MCF 10A (cell line): ENCODE measurements at regions of chr15 and their contacts with region 1.

Region 1: DNA sequence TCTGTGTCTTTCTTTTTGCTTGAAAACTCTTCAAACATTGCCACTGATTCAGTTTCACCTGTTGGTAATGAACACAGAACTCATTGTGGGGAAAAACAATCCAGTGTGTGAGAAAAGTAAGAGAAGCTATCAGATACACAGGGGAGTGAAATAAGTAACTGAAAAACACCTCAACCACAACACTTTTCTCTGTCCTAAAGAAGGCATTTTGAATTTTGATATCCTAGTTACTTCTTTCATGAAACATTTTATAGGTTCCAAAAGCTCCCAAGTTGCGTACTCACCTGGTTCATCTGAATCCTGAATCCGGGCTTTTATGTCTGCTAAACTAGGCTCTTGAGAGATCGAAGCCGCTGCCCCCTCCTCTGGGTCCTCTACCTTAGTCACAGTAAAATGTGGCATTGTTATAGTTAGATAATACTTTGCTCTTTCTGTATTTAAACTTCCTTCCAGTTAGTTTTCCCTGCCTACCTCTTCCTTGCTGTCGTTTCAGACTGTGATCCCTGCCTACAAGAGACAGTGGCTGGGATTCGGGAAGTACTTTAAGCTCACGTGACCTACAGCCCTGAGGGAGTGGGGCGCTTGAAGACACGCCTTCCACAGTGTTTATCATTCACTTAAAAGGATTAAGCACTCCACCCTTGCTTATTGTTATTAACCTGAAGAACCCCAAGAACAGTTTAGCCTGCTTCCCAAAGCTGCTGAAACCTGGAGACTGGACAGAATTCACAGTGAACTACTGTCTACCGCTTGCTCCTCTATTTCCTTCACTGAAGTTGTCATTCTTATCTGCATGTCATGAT is 19.1 kb downstream of the SLC12A6 start:
- DNase-seq: peak; percentile 77
- H3K4me3 Mint-ChIP-seq: peak overlapping the region; percentile 86
- H3K27ac Mint-ChIP-seq: peak overlapping the region; percentile 96
- H3K4me1 Mint-ChIP-seq: peaks cover 21% of the 10 kb centered on the region
- H3K27me3 Mint-ChIP-seq: no peaks in the 10 kb centered on the region
- CTCF ChIP-seq: no peak

Region 2: DNA sequence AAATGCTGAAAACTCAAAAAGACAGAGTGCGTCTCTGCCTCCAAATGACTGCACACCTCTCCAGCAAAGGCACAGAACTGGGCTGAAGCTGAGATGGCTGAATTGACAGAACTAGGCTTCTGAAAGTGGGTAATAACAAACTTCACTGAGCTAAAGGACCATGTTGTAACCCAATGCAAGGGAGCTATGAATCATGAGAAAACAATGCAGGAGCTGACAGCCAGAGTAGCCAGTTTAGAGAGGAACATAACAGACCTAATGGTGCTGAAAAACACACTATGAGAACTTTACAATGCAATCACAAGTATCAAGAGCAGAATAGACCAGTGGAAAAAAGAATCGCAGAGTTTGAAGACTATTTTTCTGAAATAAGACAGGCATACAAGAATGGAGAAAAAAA is 269.4 kb before region 1 on chr15:
- CTCF ChIA-PET with region 1: no interaction called
- POLR2A ChIA-PET with region 1: no interaction called
- intact Hi-C with region 1: no loop called
- DNase-seq: peak; percentile 66
- H3K4me3 Mint-ChIP-seq: no peak overlapping the region
- H3K27ac Mint-ChIP-seq: no peak overlapping the region
- H3K4me1 Mint-ChIP-seq: peaks cover 10% of the 10 kb centered on the region
- H3K27me3 Mint-ChIP-seq: peaks cover 11% of the 10 kb centered on the region
- CTCF ChIP-seq: no peak

Region 3: GRCh38 chr15:34241372-34242330 is 76.8 kb before region 1 on chr15:
- CTCF ChIA-PET with region 1: interaction called, 5 read pairs
- POLR2A ChIA-PET with region 1: interaction called, 26 read pairs
- intact Hi-C with region 1: no loop called
- DNase-seq: peak; percentile 64
- H3K4me3 Mint-ChIP-seq: no peak overlapping the region
- H3K27ac Mint-ChIP-seq: no peak overlapping the region
- H3K4me1 Mint-ChIP-seq: peaks cover 13% of the 10 kb centered on the region
- H3K27me3 Mint-ChIP-seq: no peaks in the 10 kb centered on the region
- CTCF ChIP-seq: peak; percentile 68

Region 4: DNA sequence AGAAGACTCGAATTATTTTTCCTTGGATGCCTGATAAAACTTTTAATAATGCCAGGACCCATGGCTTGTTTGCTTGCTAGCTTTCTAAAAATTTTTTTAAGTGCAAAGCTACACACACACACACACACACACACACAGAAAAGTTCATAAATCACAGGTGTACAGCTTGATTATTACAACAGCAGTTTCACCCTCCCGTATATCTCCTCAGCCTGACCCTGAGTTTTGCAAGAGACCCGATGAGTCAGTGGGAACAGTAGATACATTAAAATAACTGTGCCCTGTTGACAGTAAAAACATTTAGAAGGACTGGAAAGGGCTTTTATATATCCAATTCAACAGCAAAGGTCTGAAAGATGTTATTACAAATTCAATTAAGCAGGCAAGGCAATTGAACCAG is 47.0 kb before region 1 on chr15:
- CTCF ChIA-PET with region 1: no interaction called
- POLR2A ChIA-PET with region 1: interaction called, 13 read pairs
- intact Hi-C with region 1: no loop called
- DNase-seq: peak; percentile 89
- H3K4me3 Mint-ChIP-seq: no peak overlapping the region
- H3K27ac Mint-ChIP-seq: peak overlapping the region; percentile 3
- H3K4me1 Mint-ChIP-seq: peaks cover 19% of the 10 kb centered on the region
- H3K27me3 Mint-ChIP-seq: no peaks in the 10 kb centered on the region
- CTCF ChIP-seq: no peak

Region 5: GRCh38 chr15:34304613-34305012 is 13.9 kb before region 1 on chr15:
- CTCF ChIA-PET with region 1: no interaction called
- POLR2A ChIA-PET with region 1: interaction called, 18 read pairs
- intact Hi-C with region 1: no loop called
- DNase-seq: no peak
- H3K4me3 Mint-ChIP-seq: no peak overlapping the region
- H3K27ac Mint-ChIP-seq: no peak overlapping the region
- H3K4me1 Mint-ChIP-seq: peaks cover 13% of the 10 kb centered on the region
- H3K27me3 Mint-ChIP-seq: no peaks in the 10 kb centered on the region
- CTCF ChIP-seq: no peak

Region 6: GRCh38 chr15:34337557-34338306 is 19.3 kb after region 1 on chr15 and contains the start of gene SLC12A6:
- CTCF ChIA-PET with region 1: interaction called, 4 read pairs
- POLR2A ChIA-PET with region 1: interaction called, 69 read pairs
- intact Hi-C with region 1: no loop called
- DNase-seq: peak; percentile 88
- H3K4me3 Mint-ChIP-seq: peak within 1 kb of the TSS; percentile 83
- H3K27ac Mint-ChIP-seq: peak within 1 kb of the TSS; percentile 49
- H3K4me1 Mint-ChIP-seq: peaks cover 32% of the 10 kb centered on the region
- H3K27me3 Mint-ChIP-seq: no peaks in the 10 kb centered on the region
- CTCF ChIP-seq: no peak
- total RNA-seq, gene SLC12A6: 11.7 and 15.3 TPM in 2 replicates

Region 7: DNA sequence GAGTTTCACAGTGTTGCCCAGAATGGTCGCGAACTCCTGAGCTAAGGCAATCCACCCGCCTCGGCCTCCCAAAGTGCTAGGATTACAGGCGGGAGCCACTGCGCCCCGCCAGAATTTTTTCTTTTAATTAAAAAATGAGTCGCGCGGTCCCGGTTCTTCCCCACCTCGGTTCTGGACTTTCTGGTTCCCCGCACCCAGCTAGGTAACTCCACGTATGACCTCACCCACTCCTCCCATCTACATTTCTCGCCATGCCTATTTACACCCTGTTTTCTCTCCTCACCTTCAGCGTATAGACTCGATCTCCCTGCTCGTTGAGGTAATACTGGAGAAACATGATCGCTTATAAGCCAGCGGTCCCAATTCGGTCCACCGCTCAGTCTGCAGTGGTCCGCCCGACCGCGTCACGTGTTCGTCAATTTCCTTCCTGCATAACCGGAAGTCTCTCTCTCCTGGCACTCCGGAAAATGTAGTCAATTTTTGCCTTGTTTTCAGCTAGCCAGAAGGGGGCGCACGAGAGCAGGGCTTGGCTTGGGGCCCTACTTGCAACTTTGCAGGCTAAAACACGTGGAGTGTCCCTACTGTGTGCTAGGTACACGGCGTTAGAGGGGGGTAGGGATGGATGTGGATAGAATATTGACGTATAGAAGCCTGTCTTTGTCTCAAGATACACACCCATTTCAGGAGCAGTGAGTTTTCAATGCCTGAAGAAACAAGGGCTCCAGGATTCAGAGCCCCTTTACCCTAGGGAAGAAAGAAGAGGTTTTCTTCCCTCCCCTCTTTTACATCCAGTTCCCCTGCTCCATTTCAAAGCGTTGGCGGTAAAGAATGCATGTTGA is 24.5 kb after region 1 on chr15 and contains the starts of genes NOP10 and NUTM1:
- CTCF ChIA-PET with region 1: no interaction called
- POLR2A ChIA-PET with region 1: interaction called, 69 read pairs
- intact Hi-C with region 1: no loop called
- DNase-seq: peak; percentile 91
- H3K4me3 Mint-ChIP-seq: no peak within 1 kb of the TSS
- H3K27ac Mint-ChIP-seq: no peak within 1 kb of the TSS
- H3K4me1 Mint-ChIP-seq: peaks cover 5% of the 10 kb centered on the region
- H3K27me3 Mint-ChIP-seq: peaks cover 2% of the 10 kb centered on the region
- CTCF ChIP-seq: peak; percentile 91
- total RNA-seq, gene NOP10: 168 and 187 TPM in 2 replicates
- total RNA-seq, gene NUTM1: not detected in 2 replicates